BJ (cell line): ENCODE measurements at regions of chr11 and their contacts with region 1.

Region 1: DNA sequence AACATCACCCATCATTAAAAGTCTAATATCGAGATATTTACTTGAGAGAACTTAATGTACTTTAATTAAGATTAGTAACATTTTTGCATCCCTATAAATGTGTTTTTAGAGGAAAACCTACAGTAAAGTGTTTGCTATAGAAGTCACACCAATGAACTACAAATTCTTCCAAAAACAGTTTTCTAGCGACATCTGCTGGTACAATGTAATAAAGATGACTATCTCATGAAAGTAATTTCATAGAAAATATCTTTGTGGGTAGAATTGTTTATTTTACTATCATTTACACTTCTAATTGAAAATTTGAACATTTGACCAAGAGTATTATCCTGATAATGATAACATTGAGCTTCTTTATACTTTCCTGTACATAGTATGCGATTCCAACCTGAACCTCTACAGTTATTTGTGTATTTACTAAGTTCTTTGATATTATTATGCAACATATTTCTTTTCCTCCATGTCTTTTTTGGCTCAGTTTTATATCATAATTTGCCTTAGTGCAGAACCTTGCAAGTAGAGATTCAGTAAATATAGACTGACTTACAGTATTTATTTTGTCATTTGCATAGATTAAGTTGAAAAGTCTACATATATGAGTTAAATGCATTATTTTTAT is 252.7 kb downstream of the TMEM135 start:
- DNase-seq: no peak
- H3K4me3 ChIP-seq: no peak overlapping the region
- H3K27me3 ChIP-seq: no peaks in the 10 kb centered on the region
- CTCF ChIP-seq: peak; percentile 43; the same call in 1 of the 2 replicates

Region 2: GRCh38 chr11:86933891-86934581 is 356.4 kb before region 1 on chr11:
- CTCF ChIA-PET with region 1: interaction called, 12 read pairs
- POLR2A ChIA-PET with region 1: no interaction called
- DNase-seq: no peak
- H3K4me3 ChIP-seq: no peak overlapping the region
- H3K27me3 ChIP-seq: no peaks in the 10 kb centered on the region
- CTCF ChIP-seq: no peak

Region 3: GRCh38 chr11:86938900-86939880 is 351.2 kb before region 1 on chr11:
- CTCF ChIA-PET with region 1: interaction called, 12 read pairs
- POLR2A ChIA-PET with region 1: no interaction called
- DNase-seq: no peak
- H3K4me3 ChIP-seq: no peak overlapping the region
- H3K27me3 ChIP-seq: no peaks in the 10 kb centered on the region
- CTCF ChIP-seq: peak; percentile 65

Region 4: GRCh38 chr11:87275176-87275575 is 15.2 kb before region 1 on chr11:
- CTCF ChIA-PET with region 1: no interaction called
- POLR2A ChIA-PET with region 1: no interaction called
- DNase-seq: no peak
- H3K4me3 ChIP-seq: no peak overlapping the region
- H3K27me3 ChIP-seq: no peaks in the 10 kb centered on the region
- CTCF ChIP-seq: no peak